Activated CD8-positive, alpha-beta T cell treated with anti-CD3 and anti-CD28 coated beads, Interleukin-2, amount 10 ng/mL, durations not matched to agents 7 days and 5 days (primary cell): ENCODE measurements at regions of chr3 and their contacts with region 1.

Region 1: DNA sequence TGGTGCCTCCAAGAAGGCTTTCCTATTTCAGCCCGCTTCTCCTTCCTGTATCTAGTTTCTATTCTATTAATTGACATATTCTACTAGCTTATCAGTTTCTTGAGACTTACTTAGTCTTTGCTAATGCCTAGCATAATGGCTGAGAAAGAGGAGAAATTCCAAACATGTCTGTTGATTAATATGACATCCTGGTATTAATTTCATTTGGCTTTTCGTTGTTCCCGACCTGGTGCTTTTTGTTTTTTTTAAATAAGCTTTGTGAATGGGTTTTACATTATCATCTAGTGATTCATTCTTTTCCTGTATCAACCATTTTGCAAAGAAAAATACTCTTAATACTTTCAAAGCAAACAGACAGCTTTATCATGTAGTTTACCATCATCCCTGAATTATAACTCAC is 13.1 kb downstream of the WDR53 start:
- DNase-seq: no peak
- ATAC-seq: no peak
- H3K4me3 Mint-ChIP-seq: no peak overlapping the region
- H3K27ac Mint-ChIP-seq: no peak overlapping the region
- H3K4me1 Mint-ChIP-seq: peaks cover 8% of the 10 kb centered on the region
- H3K27me3 Mint-ChIP-seq: no peaks in the 10 kb centered on the region

Region 2: DNA sequence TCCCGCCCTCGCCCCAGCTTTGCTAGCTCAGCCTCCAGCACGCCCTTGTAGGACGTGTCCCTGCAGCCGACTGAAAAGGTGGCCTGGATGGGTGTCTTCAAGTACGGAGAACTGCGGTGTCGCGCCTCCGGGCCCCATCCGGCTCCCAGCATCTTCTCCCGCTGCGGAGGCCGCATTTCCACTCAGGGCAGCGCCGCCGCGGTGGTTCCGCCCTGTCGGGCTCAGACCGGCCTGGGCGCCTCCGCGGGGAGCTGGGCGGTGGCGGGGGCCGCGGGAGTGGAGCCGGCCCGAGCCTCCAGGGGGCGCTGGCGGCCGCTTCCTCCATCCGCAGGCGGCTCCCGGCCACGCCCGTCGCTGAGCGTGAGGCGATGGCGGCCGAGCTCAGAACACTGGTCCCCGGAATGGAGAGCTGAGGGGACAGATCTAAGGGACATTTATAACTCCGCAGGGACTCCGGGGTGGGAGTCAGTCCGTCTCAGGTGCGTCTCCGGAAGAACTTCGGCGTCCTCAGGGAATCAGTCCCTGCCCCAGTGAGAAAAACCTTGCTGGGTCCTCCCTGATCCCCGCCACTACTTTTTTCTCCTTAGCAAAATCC is 26.6 kb before region 1 on chr3:
- CTCF ChIA-PET with region 1: interaction called, 10 read pairs
- POLR2A ChIA-PET with region 1: no interaction called
- DNase-seq: peak; percentile 84
- ATAC-seq: peak; percentile 100
- H3K4me3 Mint-ChIP-seq: peak overlapping the region; percentile 62
- H3K27ac Mint-ChIP-seq: peak overlapping the region; percentile 25
- H3K4me1 Mint-ChIP-seq: peaks cover 11% of the 10 kb centered on the region
- H3K27me3 Mint-ChIP-seq: peaks cover 13% of the 10 kb centered on the region